ENCODE measurements at regions of chr1 and their contacts with region 1.

Region 1: GRCh38 chr1:11248155-11248554 is 14.2 kb downstream of the MTOR start:
- DNase-seq: no peak
- H3K4me3 ChIP-seq: no peak overlapping the region
- H3K27ac ChIP-seq: no peak overlapping the region
- H3K4me1 ChIP-seq: no peaks in the 10 kb centered on the region
- H3K27me3 ChIP-seq: no peaks in the 10 kb centered on the region
- CTCF ChIP-seq: no peak
- EP300 ChIP-seq: no peak
- POLR2A ChIP-seq: no peak
- RAD21 ChIP-seq: no peak; a peak in 1 of 4 replicates

Region 2: DNA sequence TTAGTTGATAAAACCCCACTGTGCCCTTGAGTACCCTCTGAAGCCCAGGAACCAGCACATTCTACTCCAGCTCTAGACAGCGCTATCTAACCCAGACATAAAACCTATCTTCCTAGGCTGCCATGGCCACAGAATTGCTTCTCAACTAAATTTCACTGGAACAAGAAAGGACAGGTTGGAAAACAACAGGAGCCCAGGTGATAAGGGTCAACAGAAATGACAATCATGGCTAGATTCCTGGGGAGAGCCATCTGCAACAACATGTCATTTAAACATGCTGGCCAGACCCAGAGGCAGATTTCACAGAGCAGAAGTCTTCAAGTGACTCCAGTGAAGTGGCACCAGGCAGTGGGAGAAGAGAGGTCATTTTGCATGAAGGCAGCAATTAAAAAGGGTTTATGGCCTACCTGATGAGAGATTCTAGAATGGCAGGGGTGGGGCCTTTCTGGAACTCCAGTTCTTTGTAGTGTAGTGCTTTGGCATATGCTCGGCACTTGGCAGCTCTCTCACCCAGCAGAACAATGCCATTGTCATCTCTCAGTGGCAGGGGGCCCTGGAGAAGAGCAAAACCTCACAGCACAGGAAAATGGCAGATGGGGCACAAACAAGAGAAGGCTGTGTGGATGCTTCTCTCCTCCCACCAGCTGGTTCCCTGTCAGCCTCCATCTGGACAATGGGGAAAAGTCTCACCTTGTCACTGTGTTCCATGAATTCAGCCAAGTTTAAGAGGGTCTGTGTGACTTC is 49.1 kb before region 1 on chr1:
- CTCF ChIA-PET with region 1: interaction called, 14 read pairs
- POLR2A ChIA-PET with region 1: interaction called, 3 read pairs
- DNase-seq: no peak
- H3K4me3 ChIP-seq: no peak overlapping the region
- H3K27ac ChIP-seq: no peak overlapping the region
- H3K4me1 ChIP-seq: no peaks in the 10 kb centered on the region
- H3K27me3 ChIP-seq: no peaks in the 10 kb centered on the region
- CTCF ChIP-seq: no peak
- EP300 ChIP-seq: no peak
- POLR2A ChIP-seq: no peak
- RAD21 ChIP-seq: no peak

Region 3: GRCh38 chr1:11262171-11263049 is 14.3 kb after region 1 on chr1 and contains the start of gene MTOR:
- CTCF ChIA-PET with region 1: interaction called, 5 read pairs
- POLR2A ChIA-PET with region 1: interaction called, 12 read pairs
- DNase-seq: peak; percentile 94 to 98
- H3K4me3 ChIP-seq: peak within 1 kb of the TSS; percentile 86 to 90 (median 88)
- H3K27ac ChIP-seq: peak within 1 kb of the TSS; percentile 60; the same call in 1 of the 2 replicates
- H3K4me1 ChIP-seq: no peaks in the 10 kb centered on the region; a peak in 1 of 7 replicates
- H3K27me3 ChIP-seq: no peaks in the 10 kb centered on the region
- CTCF ChIP-seq: peak in 2 of 3 experiments; percentile 27 to 33; a peak in 2 of 4 replicates
- EP300 ChIP-seq: no peak
- POLR2A ChIP-seq: peak; percentile 67 to 83
- RAD21 ChIP-seq: peak in 1 of 2 experiments; percentile 11; a peak in 1 of 4 replicates
- total RNA-seq, gene MTOR: 75.7 and 76.8 TPM in 2 replicates

Region 4: GRCh38 chr1:11602424-11602823 is 354.3 kb after region 1 on chr1:
- CTCF ChIA-PET with region 1: no interaction called
- POLR2A ChIA-PET with region 1: no interaction called
- DNase-seq: no peak
- H3K4me3 ChIP-seq: no peak overlapping the region
- H3K27ac ChIP-seq: no peak overlapping the region
- H3K4me1 ChIP-seq: peaks cover 0 to 9% (median 4%) of the 10 kb centered on the region in 4 experiments; a peak in 6 of 7 replicates
- H3K27me3 ChIP-seq: no peaks in the 10 kb centered on the region; a peak in 1 of 7 replicates
- CTCF ChIP-seq: no peak
- EP300 ChIP-seq: no peak
- POLR2A ChIP-seq: no peak
- RAD21 ChIP-seq: no peak

Measured in H1 (cell line).